ENCODE measurements at regions of chr7 and their contacts with region 1.

Region 1: GRCh38 chr7:76302347-76303201 is at the start of gene HSPB1:
- DNase-seq: peak; percentile 92 to 96 (median 92)
- ATAC-seq: peak; percentile 84
- H3K4me3 ChIP-seq: peak within 1 kb of the TSS; percentile 66
- H3K27ac ChIP-seq: peak within 1 kb of the TSS; percentile 81
- H3K4me1 ChIP-seq: peaks cover 17 to 56% of the 10 kb centered on the region in 2 experiments
- H3K27me3 ChIP-seq: no peaks in the 10 kb centered on the region
- CTCF ChIP-seq: 0 out of 6 replicates have a peak, but pooled peaks of 1 of the 3 experiments have one; percentile 10
- EP300 ChIP-seq: no peak; the same call in 1 of the 2 replicates
- POLR2A ChIP-seq: peak; percentile 92
- RAD21 ChIP-seq: no peak; a peak in 1 of 4 replicates
- polyA plus RNA-seq, gene HSPB1: 97.3 to 128 TPM

Region 2: GRCh38 chr7:75892634-75893272 is 409.8 kb before region 1 on chr7:
- CTCF ChIA-PET with region 1: no interaction called
- POLR2A ChIA-PET with region 1: no interaction called
- in situ Hi-C with region 1: no loop called
- intact Hi-C with region 1: no loop called
- DNase-seq: peak in 3 of 4 experiments; percentile 41 to 50 (median 42)
- ATAC-seq: peak; percentile 54
- H3K4me3 ChIP-seq: no peak overlapping the region
- H3K27ac ChIP-seq: no peak overlapping the region
- H3K4me1 ChIP-seq: peaks cover 4 to 34% of the 10 kb centered on the region in 2 experiments; a peak in 4 of 5 replicates
- H3K27me3 ChIP-seq: no peaks in the 10 kb centered on the region
- CTCF ChIP-seq: no peak
- EP300 ChIP-seq: no peak
- POLR2A ChIP-seq: no peak
- RAD21 ChIP-seq: no peak

Region 3: GRCh38 chr7:76272851-76273497 is 29.6 kb before region 1 on chr7:
- CTCF ChIA-PET with region 1: no interaction called
- POLR2A ChIA-PET with region 1: no interaction called
- in situ Hi-C with region 1: no loop called
- intact Hi-C with region 1: no loop called
- DNase-seq: no peak
- ATAC-seq: no peak
- H3K4me3 ChIP-seq: no peak overlapping the region
- H3K27ac ChIP-seq: no peak overlapping the region
- H3K4me1 ChIP-seq: peaks cover 0 to 2% of the 10 kb centered on the region in 2 experiments; a peak in 3 of 5 replicates
- H3K27me3 ChIP-seq: peaks cover 38 to 68% of the 10 kb centered on the region in 2 experiments; a peak in 4 of 5 replicates
- CTCF ChIP-seq: no peak
- EP300 ChIP-seq: no peak
- POLR2A ChIP-seq: no peak
- RAD21 ChIP-seq: no peak

Region 4: DNA sequence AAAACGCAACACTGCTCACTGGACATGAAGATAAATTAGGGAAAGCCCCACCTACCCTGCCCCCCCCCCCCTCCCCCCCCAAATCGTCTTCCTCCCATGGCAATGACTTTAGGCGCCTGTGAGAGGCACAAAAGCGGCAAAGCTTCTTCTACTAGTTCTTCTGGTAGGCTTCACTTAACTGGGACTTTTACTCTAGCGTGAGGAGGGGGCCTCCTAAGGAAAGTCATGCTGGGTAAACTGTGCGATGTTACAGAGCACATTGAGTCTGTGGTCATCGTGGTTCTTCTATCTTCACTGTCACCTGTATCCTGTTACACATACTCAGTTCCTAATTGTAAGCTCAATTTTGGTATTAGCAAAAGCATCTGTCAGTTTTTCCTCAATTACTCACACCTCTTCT is 25.0 kb after region 1 on chr7:
- CTCF ChIA-PET with region 1: no interaction called
- POLR2A ChIA-PET with region 1: interaction called, 12 read pairs
- in situ Hi-C with region 1: no loop called
- intact Hi-C with region 1: no loop called
- DNase-seq: peak in 3 of 4 experiments; percentile 51 to 59 (median 56)
- ATAC-seq: peak; percentile 41
- H3K4me3 ChIP-seq: no peak overlapping the region
- H3K27ac ChIP-seq: peak overlapping the region; percentile 33; the same call in 2 of the 3 replicates
- H3K4me1 ChIP-seq: peaks cover 10 to 18% of the 10 kb centered on the region in 2 experiments
- H3K27me3 ChIP-seq: no peaks in the 10 kb centered on the region
- CTCF ChIP-seq: no peak
- EP300 ChIP-seq: peak; percentile 36; the same call in 1 of the 2 replicates
- POLR2A ChIP-seq: no peak
- RAD21 ChIP-seq: no peak